Posterior vena cava (tissue), 2 donors: ENCODE measurements at regions of chr7 and their contacts with region 1.

Region 1: GRCh38 chr7:27665531-27665930 is 2.8 kb upstream of the HIBADH start:
- DNase-seq: no peak

Region 2: DNA sequence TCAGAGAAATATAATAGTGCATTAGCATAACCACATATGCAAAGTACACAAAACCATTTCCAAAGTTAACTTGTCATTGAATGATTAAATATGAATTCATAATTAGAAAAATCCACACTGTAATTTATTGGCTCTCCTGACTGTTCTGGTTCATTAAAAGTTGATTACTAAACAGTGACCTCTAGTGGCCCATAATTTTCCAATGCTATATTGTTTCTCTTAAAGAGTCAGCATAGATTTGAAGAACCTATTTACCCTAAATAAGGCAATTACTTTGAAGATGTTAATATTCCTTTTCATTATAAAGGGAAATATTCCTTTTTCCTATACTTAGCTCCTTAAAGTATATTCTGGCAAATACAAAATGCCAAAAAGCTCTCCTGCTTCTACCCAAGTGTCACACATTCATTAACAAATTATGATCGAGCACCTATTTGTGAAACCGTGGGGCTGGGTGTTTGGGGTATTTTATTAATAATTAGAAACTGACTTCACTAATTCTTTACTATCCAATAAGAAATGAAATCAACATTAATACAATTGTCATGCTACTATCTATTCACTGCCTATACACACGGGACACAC is 89.1 kb before region 1 on chr7:
- intact Hi-C with region 1: no loop called
- DNase-seq: no peak

Region 3: GRCh38 chr7:27714831-27715444 is 49.4 kb after region 1 on chr7:
- intact Hi-C with region 1: loop called in 1 of 2 experiments (anchors 5 kb)
- DNase-seq: no peak